ENCODE measurements at regions of chr15 and their contacts with region 1.

Region 1: DNA sequence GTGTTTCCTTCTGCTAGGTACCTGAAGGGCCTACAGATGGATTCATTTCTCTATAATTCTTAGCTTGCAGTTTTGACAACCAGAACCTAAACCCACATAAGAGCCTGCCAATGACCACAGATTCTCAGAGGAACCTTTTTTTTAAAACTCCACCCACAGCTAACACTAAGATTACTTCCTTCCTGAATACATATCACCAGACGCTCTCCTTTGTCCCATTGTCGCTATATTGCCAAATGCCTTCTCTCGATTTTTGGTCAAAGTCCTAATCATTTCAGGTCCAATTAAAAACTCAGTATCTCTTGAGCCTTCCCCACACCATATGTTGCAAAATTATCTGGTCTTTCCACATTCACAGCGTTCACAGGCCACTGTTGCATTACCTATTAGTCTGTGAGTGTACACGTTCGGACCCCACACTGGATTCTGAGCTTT is 12.4 kb downstream of the ZNF710 start:
- DNase-seq: no peak
- H3K4me3 ChIP-seq: no peak overlapping the region
- H3K27ac ChIP-seq: no peak overlapping the region
- H3K4me1 ChIP-seq: peaks cover 25% of the 10 kb centered on the region
- H3K27me3 ChIP-seq: no peaks in the 10 kb centered on the region
- CTCF ChIP-seq: no peak

Region 2: GRCh38 chr15:89971592-89971997 is 41.9 kb before region 1 on chr15:
- CTCF ChIA-PET with region 1: interaction called, 12 read pairs
- dilution Hi-C with region 1: no loop called
- in situ Hi-C with region 1: no loop called
- intact Hi-C with region 1: no loop called
- DNase-seq: peak; percentile 39
- H3K4me3 ChIP-seq: no peak overlapping the region
- H3K27ac ChIP-seq: no peak overlapping the region
- H3K4me1 ChIP-seq: no peaks in the 10 kb centered on the region
- H3K27me3 ChIP-seq: no peaks in the 10 kb centered on the region
- CTCF ChIP-seq: peak; percentile 60

Region 3: DNA sequence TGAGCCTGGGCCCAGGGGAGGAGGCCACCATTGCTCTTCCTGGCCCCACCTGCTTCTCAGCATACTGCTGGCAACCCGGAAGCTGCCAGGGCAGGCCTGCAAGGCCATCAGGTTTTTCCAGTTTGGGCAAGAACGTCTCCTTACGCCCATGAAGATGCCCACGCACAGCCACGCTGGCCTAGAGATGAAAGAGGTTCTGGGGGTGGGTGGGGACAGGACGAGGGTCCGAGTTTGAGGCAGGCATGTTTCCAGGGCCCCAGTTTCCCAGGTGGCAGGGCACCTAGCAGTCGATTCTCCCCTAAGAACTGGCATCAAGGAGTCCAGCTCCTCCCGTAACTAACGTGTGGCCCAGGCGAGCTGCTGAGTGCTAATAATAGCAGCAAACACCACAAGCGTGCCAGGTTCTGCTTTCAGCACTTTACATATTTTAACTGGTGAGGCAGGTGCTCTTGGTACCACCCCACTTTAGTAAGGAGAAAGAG is 33.4 kb after region 1 on chr15:
- CTCF ChIA-PET with region 1: no interaction called
- dilution Hi-C with region 1: loop called (anchors 5 kb)
- in situ Hi-C with region 1: no loop called
- intact Hi-C with region 1: no loop called
- DNase-seq: peak; percentile 63
- H3K4me3 ChIP-seq: no peak overlapping the region
- H3K27ac ChIP-seq: no peak overlapping the region
- H3K4me1 ChIP-seq: peaks cover 15% of the 10 kb centered on the region
- H3K27me3 ChIP-seq: no peaks in the 10 kb centered on the region
- CTCF ChIP-seq: no peak